A673 (cell line): ENCODE measurements at regions of chr17 and their contacts with region 1.

Region 1: GRCh38 chr17:2828397-2829038 is 32.3 kb downstream of the RAP1GAP2 start:
- DNase-seq: peak; percentile 63
- H3K4me3 ChIP-seq: no peak overlapping the region
- H3K27ac ChIP-seq: no peak overlapping the region
- H3K4me1 ChIP-seq: no peaks in the 10 kb centered on the region
- H3K27me3 ChIP-seq: no peaks in the 10 kb centered on the region
- CTCF ChIP-seq: peak; percentile 87

Region 2: GRCh38 chr17:2786176-2786881 is 42.2 kb before region 1 on chr17:
- CTCF ChIA-PET with region 1: interaction called, 13 read pairs
- POLR2A ChIA-PET with region 1: no interaction called
- intact Hi-C with region 1: no loop called
- DNase-seq: peak; percentile 91
- H3K4me3 ChIP-seq: no peak overlapping the region
- H3K27ac ChIP-seq: no peak overlapping the region
- H3K4me1 ChIP-seq: no peaks in the 10 kb centered on the region
- H3K27me3 ChIP-seq: no peaks in the 10 kb centered on the region
- CTCF ChIP-seq: peak; percentile 97

Region 3: GRCh38 chr17:2965563-2966235 is 137.2 kb after region 1 on chr17:
- CTCF ChIA-PET with region 1: interaction called, 12 read pairs
- POLR2A ChIA-PET with region 1: no interaction called
- intact Hi-C with region 1: no loop called
- DNase-seq: no peak
- H3K4me3 ChIP-seq: no peak overlapping the region
- H3K27ac ChIP-seq: no peak overlapping the region
- H3K4me1 ChIP-seq: no peaks in the 10 kb centered on the region
- H3K27me3 ChIP-seq: peaks cover 20% of the 10 kb centered on the region
- CTCF ChIP-seq: no peak

Region 4: DNA sequence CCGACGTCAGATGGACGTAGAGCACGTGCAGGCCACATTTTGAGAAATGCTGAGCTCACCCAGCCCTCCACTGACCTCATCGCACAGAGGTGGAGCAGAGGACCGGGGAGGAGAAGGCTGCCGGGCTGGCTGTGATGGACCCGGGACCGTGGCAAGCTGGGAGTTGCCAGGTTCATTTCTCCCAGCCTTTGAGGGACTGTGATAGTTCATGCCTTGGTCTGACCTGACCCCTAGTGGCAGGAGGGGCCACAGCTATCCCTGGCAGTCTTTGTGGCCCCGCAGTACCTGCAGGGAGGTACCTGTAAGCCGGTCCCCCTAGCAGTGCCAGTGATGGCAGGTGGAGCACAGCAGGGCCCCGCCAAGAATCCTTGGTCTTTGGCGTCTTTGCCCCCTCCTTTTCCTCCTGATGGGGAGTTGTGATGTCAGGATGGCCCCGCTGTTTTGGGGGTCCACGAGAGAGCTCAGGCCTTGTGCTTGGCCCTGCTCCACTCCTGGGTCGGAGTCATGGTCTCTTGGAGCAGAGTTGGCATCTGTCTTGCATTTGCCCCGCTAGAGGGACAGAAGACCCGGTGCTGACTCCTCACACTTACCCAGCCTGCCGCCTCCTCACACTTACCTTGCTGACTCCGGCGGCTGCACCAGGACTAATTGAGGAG is 184.5 kb after region 1 on chr17:
- CTCF ChIA-PET with region 1: interaction called, 3 read pairs
- POLR2A ChIA-PET with region 1: no interaction called
- intact Hi-C with region 1: loop called (anchors 1 kb)
- DNase-seq: peak; percentile 35
- H3K4me3 ChIP-seq: no peak overlapping the region
- H3K27ac ChIP-seq: no peak overlapping the region
- H3K4me1 ChIP-seq: no peaks in the 10 kb centered on the region
- H3K27me3 ChIP-seq: no peaks in the 10 kb centered on the region
- CTCF ChIP-seq: peak; percentile 55